A673 (cell line): ENCODE measurements at regions of chr20 and their contacts with region 1.

Region 1: GRCh38 chr20:13119583-13119982 is 101.5 kb upstream of the ISM1 start:
- DNase-seq: peak; percentile 80
- H3K4me3 ChIP-seq: no peak overlapping the region
- H3K27ac ChIP-seq: no peak overlapping the region
- H3K4me1 ChIP-seq: no peaks in the 10 kb centered on the region
- H3K27me3 ChIP-seq: no peaks in the 10 kb centered on the region
- CTCF ChIP-seq: peak; percentile 93

Region 2: GRCh38 chr20:13261460-13262301 is 142.1 kb after region 1 on chr20:
- CTCF ChIA-PET with region 1: no interaction called
- POLR2A ChIA-PET with region 1: no interaction called
- intact Hi-C with region 1: loop called (anchors 1 kb)
- DNase-seq: peak; percentile 60
- H3K4me3 ChIP-seq: no peak overlapping the region
- H3K27ac ChIP-seq: no peak overlapping the region
- H3K4me1 ChIP-seq: no peaks in the 10 kb centered on the region
- H3K27me3 ChIP-seq: no peaks in the 10 kb centered on the region
- CTCF ChIP-seq: peak; percentile 75

Region 3: DNA sequence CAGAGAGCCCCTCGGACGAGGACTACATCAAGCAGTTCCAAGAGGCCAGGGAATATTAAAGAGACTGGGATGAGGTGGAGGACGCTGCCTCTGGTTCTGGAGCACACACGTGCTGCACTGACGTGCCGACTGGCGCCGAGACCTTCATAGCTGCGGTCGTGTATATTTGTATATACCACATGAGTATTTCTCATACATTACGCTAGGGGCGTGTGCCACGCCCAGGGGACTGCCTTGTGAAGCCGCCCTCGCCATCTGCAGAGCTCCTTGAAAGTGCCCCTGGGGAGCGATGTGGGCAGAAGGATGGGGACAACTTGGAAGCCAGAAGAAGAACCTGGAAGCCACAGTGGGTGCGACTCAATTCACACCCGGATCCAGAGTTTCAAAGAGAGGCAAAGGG is 179.8 kb after region 1 on chr20:
- CTCF ChIA-PET with region 1: no interaction called
- POLR2A ChIA-PET with region 1: no interaction called
- intact Hi-C with region 1: loop called (anchors 10 kb)
- DNase-seq: no peak
- H3K4me3 ChIP-seq: no peak overlapping the region
- H3K27ac ChIP-seq: no peak overlapping the region
- H3K4me1 ChIP-seq: no peaks in the 10 kb centered on the region
- H3K27me3 ChIP-seq: no peaks in the 10 kb centered on the region
- CTCF ChIP-seq: no peak

Region 4: DNA sequence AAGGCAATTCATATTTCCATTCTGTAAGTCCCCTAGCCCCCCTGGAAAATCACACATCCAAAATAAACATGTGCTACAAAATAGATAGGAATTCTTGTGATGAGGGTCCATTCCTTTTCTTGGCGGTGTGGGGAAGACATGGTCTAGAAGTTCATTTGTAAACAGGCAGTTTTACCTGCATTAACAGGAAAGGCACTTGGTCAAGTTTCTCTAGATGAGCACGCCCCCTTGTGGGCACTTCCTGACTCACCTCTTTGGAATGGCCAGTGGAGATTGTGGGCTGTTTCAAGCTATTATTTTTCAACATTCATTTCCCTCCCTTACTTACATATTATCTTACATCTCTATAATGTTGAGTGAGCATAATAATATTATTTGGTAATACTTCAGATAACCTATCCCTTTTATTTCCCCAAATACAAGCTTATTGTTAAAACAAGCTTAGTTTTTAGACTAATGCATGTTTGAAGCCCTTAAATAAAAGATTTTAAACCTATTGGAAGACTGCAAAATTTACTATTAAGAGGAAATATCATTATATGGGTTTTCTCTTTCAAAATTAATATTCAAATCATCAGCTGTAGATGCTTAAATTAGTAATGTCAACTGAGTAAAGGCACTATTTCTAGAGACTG is 427.0 kb after region 1 on chr20:
- CTCF ChIA-PET with region 1: interaction called, 6 read pairs
- POLR2A ChIA-PET with region 1: no interaction called
- intact Hi-C with region 1: loop called (anchors 1 kb)
- DNase-seq: peak; percentile 81
- H3K4me3 ChIP-seq: no peak overlapping the region
- H3K27ac ChIP-seq: no peak overlapping the region
- H3K4me1 ChIP-seq: peaks cover 16% of the 10 kb centered on the region
- H3K27me3 ChIP-seq: no peaks in the 10 kb centered on the region
- CTCF ChIP-seq: peak; percentile 90

Region 5: GRCh38 chr20:13784893-13785715 is 665.5 kb after region 1 on chr20 and contains the starts of genes ESF1 and NDUFAF5:
- CTCF ChIA-PET with region 1: no interaction called
- POLR2A ChIA-PET with region 1: no interaction called
- intact Hi-C with region 1: loop called (anchors 5 kb)
- DNase-seq: peak; percentile 99
- H3K4me3 ChIP-seq: peak within 1 kb of the TSS; percentile 94
- H3K27ac ChIP-seq: peak within 1 kb of the TSS; percentile 81
- H3K4me1 ChIP-seq: peaks cover 7% of the 10 kb centered on the region
- H3K27me3 ChIP-seq: no peaks in the 10 kb centered on the region
- CTCF ChIP-seq: no peak
- total RNA-seq, gene ESF1: 29.4 and 34.7 TPM in 2 replicates
- total RNA-seq, gene NDUFAF5: 49.6 and 57.1 TPM in 2 replicates